Activated naive CD4-positive, alpha-beta T cell treated with anti-CD3 and anti-CD28 coated beads, Interleukin-2, amount 10 ng/mL, durations not matched to agents 7 days and 5 days (primary cell): ENCODE measurements at regions of chr17 and their contacts with region 1.

Region 1: DNA sequence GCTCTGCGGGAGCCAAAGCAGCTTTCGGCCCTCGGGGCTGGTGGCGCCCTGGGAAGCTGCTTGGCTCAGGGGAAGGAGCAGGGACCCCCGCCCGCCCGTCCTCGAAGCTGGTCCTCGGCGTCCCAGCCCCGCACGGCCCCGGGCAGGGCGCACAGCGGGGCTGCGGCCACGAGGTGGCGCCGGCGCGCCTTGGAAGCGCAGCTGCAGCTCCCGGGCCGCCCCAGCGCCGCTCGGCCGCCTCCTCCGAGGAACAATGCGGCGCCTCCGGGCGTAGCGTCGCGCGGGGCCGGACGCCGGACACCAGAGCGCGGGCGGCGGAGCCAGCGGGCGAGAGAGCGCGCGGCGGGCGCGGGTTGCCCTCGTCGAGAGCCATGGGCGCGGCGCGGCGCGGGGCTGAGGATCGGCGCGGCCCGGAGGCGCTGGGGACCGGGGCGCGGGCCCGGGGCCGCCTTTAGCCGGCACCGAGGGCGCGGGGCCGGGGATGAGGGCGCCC is at the start of gene MGAT5B:
- DNase-seq: peak; percentile 79
- H3K4me3 Mint-ChIP-seq: peak within 1 kb of the TSS; percentile 69
- H3K27ac Mint-ChIP-seq: no peak within 1 kb of the TSS
- H3K4me1 Mint-ChIP-seq: peaks cover 7% of the 10 kb centered on the region
- H3K27me3 Mint-ChIP-seq: peaks cover 79% of the 10 kb centered on the region

Region 2: GRCh38 chr17:76924345-76925342 is 56.4 kb after region 1 on chr17:
- CTCF ChIA-PET with region 1: no interaction called
- DNase-seq: no peak
- H3K4me3 Mint-ChIP-seq: no peak overlapping the region
- H3K27ac Mint-ChIP-seq: no peak overlapping the region
- H3K4me1 Mint-ChIP-seq: no peaks in the 10 kb centered on the region
- H3K27me3 Mint-ChIP-seq: peaks cover 14% of the 10 kb centered on the region

Region 3: DNA sequence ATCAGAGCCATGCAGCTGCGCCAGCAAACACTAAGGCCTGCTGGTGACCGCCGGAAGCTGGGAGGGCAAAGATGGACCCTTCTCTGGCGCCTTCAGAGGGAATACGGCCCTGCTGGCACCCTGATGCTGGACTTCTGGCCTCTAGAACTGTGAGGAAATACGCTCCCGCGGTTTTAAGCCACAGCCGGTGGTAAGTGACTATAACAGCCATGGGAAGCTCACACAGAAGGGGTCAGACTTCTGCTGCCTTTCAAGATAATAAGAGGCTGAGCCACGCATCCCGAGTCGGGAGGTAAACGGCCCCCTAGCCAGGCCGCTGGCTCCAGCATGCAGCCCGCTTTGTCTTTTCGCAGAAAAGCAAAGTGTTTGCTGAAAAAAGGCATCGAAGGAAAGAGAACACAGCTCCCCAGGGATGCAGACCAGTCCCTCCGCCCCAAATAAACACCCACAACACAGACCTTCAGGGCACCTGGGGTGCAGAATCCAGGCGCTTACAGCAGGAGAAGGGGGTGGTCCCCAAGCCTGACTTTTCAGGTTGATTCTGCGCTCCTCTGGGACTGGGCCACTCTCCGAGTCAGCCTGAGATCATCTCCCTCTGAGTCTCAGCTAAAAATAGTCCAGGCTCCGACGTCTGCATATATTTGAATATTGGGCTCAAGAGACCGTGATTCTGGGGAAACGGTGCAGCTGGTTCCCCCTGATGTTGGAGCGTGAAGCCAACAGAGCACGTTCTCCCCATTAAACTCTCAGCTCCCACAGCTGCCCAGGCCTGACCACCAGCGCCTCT is 89.6 kb after region 1 on chr17:
- CTCF ChIA-PET with region 1: no interaction called
- DNase-seq: no peak
- H3K4me3 Mint-ChIP-seq: no peak overlapping the region
- H3K27ac Mint-ChIP-seq: no peak overlapping the region
- H3K4me1 Mint-ChIP-seq: no peaks in the 10 kb centered on the region
- H3K27me3 Mint-ChIP-seq: peaks cover 34% of the 10 kb centered on the region

Region 4: GRCh38 chr17:77011173-77012011 is 143.2 kb after region 1 on chr17:
- CTCF ChIA-PET with region 1: interaction called, 11 read pairs
- DNase-seq: peak; percentile 72
- H3K4me3 Mint-ChIP-seq: no peak overlapping the region
- H3K27ac Mint-ChIP-seq: no peak overlapping the region
- H3K4me1 Mint-ChIP-seq: no peaks in the 10 kb centered on the region
- H3K27me3 Mint-ChIP-seq: peaks cover 53% of the 10 kb centered on the region

Region 5: GRCh38 chr17:77054936-77055335 is 186.7 kb after region 1 on chr17:
- CTCF ChIA-PET with region 1: interaction called, 66 read pairs
- DNase-seq: no peak
- H3K4me3 Mint-ChIP-seq: no peak overlapping the region
- H3K27ac Mint-ChIP-seq: no peak overlapping the region
- H3K4me1 Mint-ChIP-seq: no peaks in the 10 kb centered on the region
- H3K27me3 Mint-ChIP-seq: peaks cover 50% of the 10 kb centered on the region

Region 6: GRCh38 chr17:77068915-77069314 is 200.7 kb after region 1 on chr17:
- CTCF ChIA-PET with region 1: interaction called, 25 read pairs
- DNase-seq: no peak
- H3K4me3 Mint-ChIP-seq: no peak overlapping the region
- H3K27ac Mint-ChIP-seq: no peak overlapping the region
- H3K4me1 Mint-ChIP-seq: no peaks in the 10 kb centered on the region
- H3K27me3 Mint-ChIP-seq: peaks cover 65% of the 10 kb centered on the region